ENCODE measurements at regions of chr17 and their contacts with region 1.

Region 1: GRCh38 chr17:44070455-44071197 is at the start of gene G6PC3:
- DNase-seq: peak; percentile 94 to 96 (median 95)
- H3K4me3 ChIP-seq: peak within 1 kb of the TSS; percentile 64
- H3K27ac ChIP-seq: peak within 1 kb of the TSS; percentile 65 to 72
- H3K4me1 ChIP-seq: peaks cover 8% of the 10 kb centered on the region
- H3K27me3 ChIP-seq: no peaks in the 10 kb centered on the region
- CTCF ChIP-seq: peak in 2 of 3 donors; percentile 23 to 49
- EP300 ChIP-seq: no peak
- POLR2A ChIP-seq: peak; percentile 67
- total RNA-seq, gene G6PC3: 14.4 to 56.7 (median 36.2) TPM

Region 2: GRCh38 chr17:43927060-43927864 is 143.4 kb before region 1 on chr17:
- intact Hi-C with region 1: no loop called
- DNase-seq: no peak
- H3K4me3 ChIP-seq: no peak overlapping the region
- H3K27ac ChIP-seq: no peak overlapping the region
- H3K4me1 ChIP-seq: no peaks in the 10 kb centered on the region
- H3K27me3 ChIP-seq: no peaks in the 10 kb centered on the region
- CTCF ChIP-seq: no peak
- EP300 ChIP-seq: no peak
- POLR2A ChIP-seq: no peak

Region 3: GRCh38 chr17:44110823-44111633 is 40.4 kb after region 1 on chr17:
- intact Hi-C with region 1: loop called (anchors 2 to 5 kb)
- DNase-seq: peak; percentile 100
- H3K4me3 ChIP-seq: peak overlapping the region; percentile 33
- H3K27ac ChIP-seq: peak overlapping the region; percentile 85 to 87
- H3K4me1 ChIP-seq: peaks cover 49% of the 10 kb centered on the region
- H3K27me3 ChIP-seq: no peaks in the 10 kb centered on the region
- CTCF ChIP-seq: peak in 1 of 3 donors; percentile 20
- EP300 ChIP-seq: no peak
- POLR2A ChIP-seq: peak; percentile 47

Region 4: DNA sequence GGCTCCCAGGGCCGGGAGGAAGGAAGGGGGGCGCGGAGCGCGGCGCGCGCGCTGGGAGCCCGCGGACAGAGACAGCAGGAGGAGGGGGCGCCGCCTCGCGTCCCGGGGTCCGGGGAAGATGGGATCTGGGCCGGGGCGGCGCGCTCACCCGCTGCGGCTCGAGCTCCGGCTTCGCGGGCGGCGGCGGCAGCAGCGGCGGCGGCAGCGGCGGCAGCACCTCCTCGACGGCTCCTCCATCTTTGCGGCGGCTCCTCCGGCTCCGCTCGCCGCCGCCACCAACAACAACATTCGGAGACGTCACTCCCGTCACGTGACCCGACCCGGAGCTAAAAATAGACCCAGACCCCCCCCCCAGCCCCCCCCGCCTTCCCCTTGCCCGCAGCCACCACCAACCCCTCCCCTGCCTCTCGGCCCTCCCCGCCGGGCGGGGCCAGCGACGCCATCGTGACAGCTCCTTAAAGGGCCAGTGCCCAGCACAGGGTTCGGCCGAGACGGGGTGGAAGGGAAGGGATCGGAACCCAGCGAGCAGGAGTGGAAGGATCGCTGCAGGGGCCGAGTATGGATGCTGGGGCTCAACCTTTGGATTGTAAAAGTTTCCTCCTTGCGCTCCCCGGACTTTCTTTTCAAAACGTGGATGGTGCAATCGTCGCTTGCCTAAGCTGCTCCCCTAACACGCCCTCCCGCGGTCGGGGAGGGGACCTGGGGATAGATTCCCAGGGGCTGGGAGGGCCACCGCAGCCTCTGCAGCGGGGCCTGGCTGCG is 52.9 kb after region 1 on chr17 and contains the start of gene HDAC5:
- intact Hi-C with region 1: loop called in 1 of 4 experiments (anchors 5 kb)
- DNase-seq: peak; percentile 95 to 97 (median 96)
- H3K4me3 ChIP-seq: peak within 1 kb of the TSS; percentile 82
- H3K27ac ChIP-seq: peak within 1 kb of the TSS; percentile 93 to 100
- H3K4me1 ChIP-seq: peaks cover 16% of the 10 kb centered on the region
- H3K27me3 ChIP-seq: no peaks in the 10 kb centered on the region
- CTCF ChIP-seq: peak; percentile 18 to 77 (median 69)
- EP300 ChIP-seq: peak; percentile 7
- POLR2A ChIP-seq: peak; percentile 85
- total RNA-seq, gene HDAC5: 35.1 to 97.6 (median 67.2) TPM

Region 5: GRCh38 chr17:44141717-44142285 is 71.2 kb after region 1 on chr17 and contains the start of gene HROB:
- intact Hi-C with region 1: no loop called
- DNase-seq: peak; percentile 93 to 98 (median 97)
- H3K4me3 ChIP-seq: peak within 1 kb of the TSS; percentile 63
- H3K27ac ChIP-seq: no peak within 1 kb of the TSS
- H3K4me1 ChIP-seq: no peaks in the 10 kb centered on the region
- H3K27me3 ChIP-seq: no peaks in the 10 kb centered on the region
- CTCF ChIP-seq: peak; percentile 87 to 95 (median 89)
- EP300 ChIP-seq: no peak
- POLR2A ChIP-seq: no peak
- total RNA-seq, gene HROB: 0.86 to 6.3 (median 0.97) TPM

Measured in ovary (tissue), 10 donors.